ENCODE measurements at regions of chr1 and their contacts with region 1.

Region 1: DNA sequence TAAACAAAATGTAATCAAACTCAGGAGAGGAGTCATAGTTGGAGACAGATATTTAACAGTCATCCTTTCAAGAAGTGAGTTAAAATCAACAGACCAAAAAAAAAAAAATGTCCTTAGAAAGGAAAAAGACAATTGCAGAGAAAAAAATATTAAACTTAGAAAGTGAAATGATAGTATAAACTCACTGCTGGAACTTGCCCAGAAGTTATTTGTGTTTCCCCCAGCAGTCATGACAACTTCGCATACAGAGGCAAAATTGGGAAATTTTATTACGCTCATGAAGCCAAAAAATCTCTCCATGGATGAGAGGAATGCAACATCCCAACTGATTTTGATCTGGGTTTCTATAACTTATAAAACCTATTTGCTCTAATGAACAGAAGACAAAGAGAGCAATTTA is 198.2 kb downstream of the LRRC7 start:
- DNase-seq: no peak
- H3K4me3 ChIP-seq: no peak overlapping the region
- H3K27ac ChIP-seq: no peak overlapping the region
- H3K4me1 ChIP-seq: no peaks in the 10 kb centered on the region
- H3K27me3 ChIP-seq: no peaks in the 10 kb centered on the region
- CTCF ChIP-seq: no peak

Region 2: DNA sequence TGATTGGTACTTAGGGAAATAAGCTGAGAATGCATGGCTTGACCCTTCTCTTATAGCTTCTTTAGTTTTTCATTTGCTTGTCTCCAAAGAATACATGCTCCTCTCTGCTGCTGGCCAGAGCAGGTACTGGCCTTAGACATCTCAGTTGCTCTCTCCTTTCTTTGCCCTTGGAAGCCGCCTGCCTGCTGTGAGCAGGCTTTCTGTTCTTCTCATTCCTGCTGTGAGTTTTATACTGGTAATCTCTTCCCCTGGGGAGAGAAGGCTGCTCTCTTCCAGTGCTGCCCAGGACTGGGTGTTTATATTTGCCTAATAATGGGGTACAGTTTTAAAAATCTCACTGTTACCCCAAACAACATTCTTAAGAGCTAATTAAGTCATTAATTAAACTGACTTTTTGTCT is 521.7 kb before region 1 on chr1:
- CTCF ChIA-PET with region 1: no interaction called
- POLR2A ChIA-PET with region 1: interaction called, 14 read pairs
- intact Hi-C with region 1: no loop called
- DNase-seq: no peak
- H3K4me3 ChIP-seq: no peak overlapping the region
- H3K27ac ChIP-seq: no peak overlapping the region
- H3K4me1 ChIP-seq: no peaks in the 10 kb centered on the region
- H3K27me3 ChIP-seq: no peaks in the 10 kb centered on the region
- CTCF ChIP-seq: no peak